ENCODE measurements at regions of chr1 and their contacts with region 1.

Region 1: GRCh38 chr1:243482141-243483022 is 226.5 kb downstream of the SDCCAG8 start:
- DNase-seq: no peak
- ATAC-seq: peak in 3 of 4 donors; percentile 17 to 63 (median 42)
- H3K4me3 ChIP-seq: peak overlapping the region; percentile 51
- H3K27ac ChIP-seq: no peak overlapping the region
- H3K4me1 ChIP-seq: peaks cover 5% of the 10 kb centered on the region
- H3K27me3 ChIP-seq: no peaks in the 10 kb centered on the region
- CTCF ChIP-seq: no peak

Region 2: DNA sequence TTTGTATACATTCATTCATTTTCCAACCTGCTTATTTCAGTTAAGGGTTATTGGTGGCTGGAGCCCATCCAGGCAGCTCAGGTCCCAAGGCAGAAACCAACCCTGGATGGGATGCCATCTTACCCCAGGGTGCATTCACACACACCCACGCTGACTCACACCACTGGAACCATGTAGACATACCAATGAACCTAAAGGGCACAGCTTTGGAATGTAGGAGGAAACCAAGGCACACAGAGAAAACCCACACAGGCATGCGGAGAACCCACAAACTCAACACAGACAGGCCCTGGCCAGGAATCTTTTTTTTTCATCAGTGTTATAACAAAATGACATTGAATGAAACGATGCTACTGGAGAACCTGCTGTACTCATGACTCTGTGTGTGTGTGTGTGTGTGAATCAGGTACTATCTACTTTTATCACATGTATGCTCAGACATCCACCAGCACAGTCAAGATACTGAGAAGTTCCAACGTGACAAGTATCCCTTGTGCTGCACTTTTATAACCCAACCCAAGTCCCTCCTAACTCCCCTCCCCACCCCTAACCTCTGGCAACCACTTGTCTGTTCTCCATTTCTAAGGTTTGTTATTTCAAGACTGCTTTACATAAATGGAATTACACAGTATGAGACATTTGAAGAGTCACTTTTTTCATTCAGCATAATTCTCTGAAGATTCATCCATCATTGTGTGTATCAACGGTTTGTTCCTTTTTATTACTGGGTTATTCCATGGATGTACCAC is 671.1 kb before region 1 on chr1:
- intact Hi-C with region 1: no loop called
- DNase-seq: no peak
- ATAC-seq: no peak
- H3K4me3 ChIP-seq: no peak overlapping the region
- H3K27ac ChIP-seq: no peak overlapping the region
- H3K4me1 ChIP-seq: no peaks in the 10 kb centered on the region
- H3K27me3 ChIP-seq: no peaks in the 10 kb centered on the region
- CTCF ChIP-seq: no peak

Region 3: DNA sequence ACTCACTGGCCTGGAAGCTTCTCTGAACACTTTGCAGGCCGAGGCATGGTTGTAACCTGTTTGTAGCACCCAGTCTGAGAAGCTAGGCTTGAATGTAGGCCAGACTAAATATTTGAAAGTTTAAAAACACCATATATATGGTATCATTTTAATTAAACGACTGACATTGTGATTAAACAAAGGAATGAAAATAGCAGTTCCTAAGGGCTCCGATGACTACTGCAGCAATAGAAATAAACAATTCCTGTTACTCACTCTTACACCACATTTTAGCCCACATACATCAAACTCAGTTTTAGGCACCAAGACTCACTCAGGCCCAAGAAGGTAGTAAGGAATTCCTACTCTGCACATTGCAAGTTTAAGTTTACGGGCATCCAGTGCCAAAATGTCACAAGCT is 86.4 kb after region 1 on chr1:
- intact Hi-C with region 1: no loop called
- DNase-seq: no peak
- ATAC-seq: no peak
- H3K4me3 ChIP-seq: no peak overlapping the region
- H3K27ac ChIP-seq: no peak overlapping the region
- H3K4me1 ChIP-seq: no peaks in the 10 kb centered on the region
- H3K27me3 ChIP-seq: no peaks in the 10 kb centered on the region
- CTCF ChIP-seq: no peak

Region 4: DNA sequence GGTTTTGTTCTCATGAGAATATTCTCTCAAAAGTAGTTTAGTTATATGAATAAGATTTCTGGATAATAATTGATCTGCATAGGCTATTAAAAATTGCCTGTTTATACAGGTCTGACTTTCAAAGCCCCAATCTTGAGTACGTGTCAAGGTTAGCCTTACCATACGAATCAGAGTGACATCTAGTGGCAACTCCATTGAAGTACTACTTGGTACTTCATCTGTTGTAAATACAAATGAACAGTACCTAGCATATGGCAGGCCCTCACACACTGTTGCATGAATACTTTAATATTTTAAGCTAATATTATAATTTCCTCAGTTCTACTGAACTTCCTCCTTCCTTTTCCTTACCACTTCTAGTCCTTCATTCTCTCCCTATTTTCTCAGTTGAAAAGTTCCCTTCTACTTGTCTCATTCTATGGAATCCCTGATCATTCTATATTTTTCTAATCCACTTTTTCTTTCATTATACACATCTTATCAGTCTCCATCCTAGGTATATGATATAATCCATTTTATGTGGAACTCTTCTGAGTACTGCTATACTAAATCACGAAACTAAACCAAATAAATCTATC is 266.4 kb after region 1 on chr1:
- intact Hi-C with region 1: loop called in 1 of 2 experiments (anchors 10 kb)
- DNase-seq: no peak
- ATAC-seq: peak; percentile 76 to 92 (median 84)
- H3K4me3 ChIP-seq: no peak overlapping the region
- H3K27ac ChIP-seq: no peak overlapping the region
- H3K4me1 ChIP-seq: no peaks in the 10 kb centered on the region
- H3K27me3 ChIP-seq: no peaks in the 10 kb centered on the region
- CTCF ChIP-seq: peak; percentile 86

Region 5: GRCh38 chr1:243946946-243947345 is 464.6 kb after region 1 on chr1:
- intact Hi-C with region 1: no loop called
- DNase-seq: no peak
- ATAC-seq: peak in 2 of 4 donors; percentile 29 to 31
- H3K4me3 ChIP-seq: no peak overlapping the region
- H3K27ac ChIP-seq: no peak overlapping the region
- H3K4me1 ChIP-seq: no peaks in the 10 kb centered on the region
- H3K27me3 ChIP-seq: peaks cover 0 to 3% (median 0%) of the 10 kb centered on the region in 3 donors
- CTCF ChIP-seq: peak; percentile 26